Activated B cell treated with CpG ODN at 0.5 μM for 24 hours (primary cell): ENCODE measurements at regions of chr2 and their contacts with region 1.

Region 1: GRCh38 chr2:202750763-202751427 is 116.1 kb downstream of the FAM117B start:
- DNase-seq: no peak
- ATAC-seq: peak; percentile 85
- H3K4me3 Mint-ChIP-seq: peak overlapping the region; percentile 54
- H3K27ac Mint-ChIP-seq: peak overlapping the region; percentile 92
- H3K4me1 Mint-ChIP-seq: peaks cover 51% of the 10 kb centered on the region
- H3K27me3 Mint-ChIP-seq: no peaks in the 10 kb centered on the region
- CTCF ChIP-seq: no peak

Region 2: DNA sequence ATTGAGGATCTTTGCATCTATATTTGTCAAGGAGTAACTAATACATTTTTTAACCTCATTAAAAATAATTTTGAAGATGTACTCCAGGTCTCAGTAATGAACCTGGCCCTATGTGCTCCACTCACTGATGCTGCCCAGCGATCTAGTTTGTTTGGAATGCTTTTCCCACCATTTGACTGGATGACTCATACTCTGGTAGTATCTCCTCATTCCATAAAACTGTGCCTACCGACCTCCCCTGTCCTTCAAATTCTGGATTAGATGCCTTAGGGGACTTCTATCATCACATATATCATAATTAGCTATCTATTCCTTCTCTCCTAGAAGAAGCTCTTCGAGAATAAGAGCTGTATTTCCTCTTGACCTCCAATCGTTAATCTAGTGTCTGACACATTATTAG is 32.3 kb before region 1 on chr2:
- CTCF ChIA-PET with region 1: no interaction called
- POLR2A ChIA-PET with region 1: no interaction called
- intact Hi-C with region 1: no loop called
- DNase-seq: no peak
- ATAC-seq: no peak
- H3K4me3 Mint-ChIP-seq: no peak overlapping the region
- H3K27ac Mint-ChIP-seq: peak overlapping the region; percentile 61
- H3K4me1 Mint-ChIP-seq: peaks cover 38% of the 10 kb centered on the region
- H3K27me3 Mint-ChIP-seq: no peaks in the 10 kb centered on the region
- CTCF ChIP-seq: no peak

Region 3: DNA sequence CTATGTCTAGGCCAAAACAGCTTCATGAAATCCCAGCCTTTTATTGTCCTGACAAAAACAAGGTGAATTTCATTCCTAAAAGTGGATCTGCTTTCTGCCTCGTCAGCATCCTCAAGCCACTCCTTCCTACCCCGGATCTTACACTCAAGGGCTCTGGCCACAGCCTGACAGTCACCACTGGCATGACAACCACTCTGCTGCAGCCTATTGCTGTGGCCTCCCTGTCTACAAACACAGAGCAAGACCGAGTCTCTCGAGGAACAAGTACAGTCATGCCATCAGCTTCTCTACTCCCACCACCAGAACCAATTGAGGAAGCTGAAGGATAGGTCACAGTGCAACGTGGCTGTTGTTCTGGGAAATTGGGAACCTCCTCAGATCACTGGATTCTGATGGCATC is 14.5 kb after region 1 on chr2:
- CTCF ChIA-PET with region 1: no interaction called
- POLR2A ChIA-PET with region 1: interaction called, 3 read pairs
- intact Hi-C with region 1: loop called (anchors 1 kb)
- DNase-seq: no peak
- ATAC-seq: no peak
- H3K4me3 Mint-ChIP-seq: no peak overlapping the region
- H3K27ac Mint-ChIP-seq: peak overlapping the region; percentile 65
- H3K4me1 Mint-ChIP-seq: peaks cover 24% of the 10 kb centered on the region
- H3K27me3 Mint-ChIP-seq: no peaks in the 10 kb centered on the region
- CTCF ChIP-seq: no peak